Astrocyte of the cerebellum (primary cell): ENCODE measurements at regions of chr12 and their contacts with region 1.

Region 1: DNA sequence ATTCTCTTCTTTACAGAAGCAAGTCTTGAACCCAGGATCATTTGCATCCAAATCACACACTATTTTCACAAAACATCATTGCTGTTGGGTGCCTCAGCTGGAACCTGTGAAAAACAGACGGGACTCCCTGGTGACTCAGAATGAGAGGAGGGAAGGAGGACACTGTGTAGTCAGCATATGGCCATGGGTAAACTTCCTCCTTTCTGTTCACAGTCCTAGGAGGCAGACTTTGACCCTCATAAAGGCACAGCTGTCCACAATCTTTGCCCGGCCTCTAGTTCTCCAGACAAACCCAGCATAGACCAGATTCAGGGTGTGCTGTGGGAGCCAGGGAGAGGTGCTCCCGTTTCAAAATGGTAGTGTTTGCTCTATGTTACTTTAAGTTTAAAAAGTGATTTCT is 62.0 kb downstream of the DYRK2 start:
- DNase-seq: no peak
- H3K4me3 ChIP-seq: no peak overlapping the region
- CTCF ChIP-seq: no peak

Region 2: GRCh38 chr12:67794161-67794560 is 83.6 kb after region 1 on chr12:
- in situ Hi-C with region 1: loop called (anchors 5 kb)
- DNase-seq: no peak
- H3K4me3 ChIP-seq: no peak overlapping the region
- CTCF ChIP-seq: no peak